GM12878 (cell line): ENCODE measurements at regions of chr9 and their contacts with region 1.

Region 1: DNA sequence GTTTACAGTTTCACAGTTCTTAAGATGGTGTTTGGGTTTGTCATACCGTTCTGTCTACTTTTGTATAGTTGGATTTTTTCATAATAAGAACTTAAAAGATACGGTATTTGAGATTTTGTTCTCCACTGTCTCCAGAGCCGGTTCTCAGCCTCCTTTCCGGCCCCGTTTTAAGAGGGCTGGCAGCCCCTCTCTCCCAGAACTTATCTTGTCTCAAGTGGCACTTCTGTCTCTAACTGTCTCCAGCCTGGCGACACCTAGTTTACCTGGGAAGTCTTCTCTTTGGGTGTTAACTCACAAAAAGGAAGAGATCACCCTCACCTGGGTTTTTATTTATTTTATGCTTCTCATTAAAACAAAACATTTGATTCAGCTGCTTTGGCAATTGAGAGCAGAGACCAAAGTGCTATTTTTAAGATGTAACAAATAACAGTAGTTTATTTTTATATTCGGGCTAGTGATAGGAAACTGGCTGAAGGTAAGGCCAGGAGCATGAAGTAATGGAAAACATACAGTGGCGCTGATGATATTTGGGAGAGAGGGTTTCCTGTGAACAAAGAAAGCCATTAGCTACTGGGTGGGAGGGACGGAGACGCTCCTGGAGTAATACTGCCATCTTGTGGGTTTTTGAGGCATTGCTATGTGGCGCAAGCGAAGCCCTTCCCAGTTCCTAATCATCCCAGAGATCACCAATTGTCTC is 48.3 kb downstream of the ACER2 start:
- DNase-seq: peak; percentile 46
- ATAC-seq: peak; percentile 93
- H3K4me3 ChIP-seq: peak overlapping the region; percentile 47; the same call in 1 of the 2 replicates
- H3K27ac ChIP-seq: no peak overlapping the region
- H3K4me1 ChIP-seq: peaks cover 6% of the 10 kb centered on the region
- H3K27me3 ChIP-seq: no peaks in the 10 kb centered on the region
- CTCF ChIP-seq: peak; percentile 86 to 93 (median 92)
- EP300 ChIP-seq: no peak
- POLR2A ChIP-seq: no peak
- RAD21 ChIP-seq: peak; percentile 90

Region 2: GRCh38 chr9:18255158-18255629 is 1202.0 kb before region 1 on chr9:
- CTCF ChIA-PET with region 1: interaction called, 9 read pairs
- POLR2A ChIA-PET with region 1: no interaction called
- RAD21 ChIA-PET with region 1: interaction called, 3 read pairs
- SMC1A ChIA-PET with region 1: interaction called, 12 read pairs
- in situ Hi-C with region 1: loop called (anchors 25 kb)
- intact Hi-C with region 1: loop called (anchors 5 kb)
- DNase-seq: peak; percentile 9
- ATAC-seq: peak; percentile 96
- H3K4me3 ChIP-seq: no peak overlapping the region
- H3K27ac ChIP-seq: no peak overlapping the region
- H3K4me1 ChIP-seq: no peaks in the 10 kb centered on the region
- H3K27me3 ChIP-seq: no peaks in the 10 kb centered on the region
- CTCF ChIP-seq: peak; percentile 80 to 92 (median 88)
- EP300 ChIP-seq: no peak
- POLR2A ChIP-seq: no peak
- RAD21 ChIP-seq: peak; percentile 96

Region 3: DNA sequence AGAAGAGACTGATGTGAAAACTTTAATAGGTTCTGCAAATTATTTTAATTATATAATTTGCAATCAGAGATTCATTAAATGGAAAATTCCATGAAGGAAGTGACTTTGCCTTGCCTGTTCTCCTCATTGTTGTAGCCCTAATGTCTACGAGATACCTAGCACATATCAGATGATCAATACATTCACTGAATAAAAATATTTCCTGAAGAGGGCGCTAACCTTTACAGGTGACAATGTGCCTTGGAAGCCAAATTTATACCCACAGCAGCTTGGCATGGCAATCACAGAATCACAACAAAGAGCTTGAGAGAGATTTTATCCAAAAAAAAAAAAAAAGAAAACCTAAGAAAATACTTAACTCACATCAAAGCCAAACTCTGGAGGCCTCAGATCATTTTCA is 371.8 kb before region 1 on chr9:
- CTCF ChIA-PET with region 1: interaction called, 29 read pairs
- POLR2A ChIA-PET with region 1: no interaction called
- RAD21 ChIA-PET with region 1: interaction called, 19 read pairs
- SMC1A ChIA-PET with region 1: interaction called, 34 read pairs
- in situ Hi-C with region 1: no loop called
- intact Hi-C with region 1: loop called (anchors 5 kb)
- DNase-seq: no peak
- ATAC-seq: peak; percentile 88
- H3K4me3 ChIP-seq: no peak overlapping the region
- H3K27ac ChIP-seq: no peak overlapping the region
- H3K4me1 ChIP-seq: no peaks in the 10 kb centered on the region
- H3K27me3 ChIP-seq: no peaks in the 10 kb centered on the region
- CTCF ChIP-seq: peak; percentile 33 to 47 (median 35); a peak in 3 of 6 replicates
- EP300 ChIP-seq: no peak
- POLR2A ChIP-seq: no peak
- RAD21 ChIP-seq: peak; percentile 47

Region 4: DNA sequence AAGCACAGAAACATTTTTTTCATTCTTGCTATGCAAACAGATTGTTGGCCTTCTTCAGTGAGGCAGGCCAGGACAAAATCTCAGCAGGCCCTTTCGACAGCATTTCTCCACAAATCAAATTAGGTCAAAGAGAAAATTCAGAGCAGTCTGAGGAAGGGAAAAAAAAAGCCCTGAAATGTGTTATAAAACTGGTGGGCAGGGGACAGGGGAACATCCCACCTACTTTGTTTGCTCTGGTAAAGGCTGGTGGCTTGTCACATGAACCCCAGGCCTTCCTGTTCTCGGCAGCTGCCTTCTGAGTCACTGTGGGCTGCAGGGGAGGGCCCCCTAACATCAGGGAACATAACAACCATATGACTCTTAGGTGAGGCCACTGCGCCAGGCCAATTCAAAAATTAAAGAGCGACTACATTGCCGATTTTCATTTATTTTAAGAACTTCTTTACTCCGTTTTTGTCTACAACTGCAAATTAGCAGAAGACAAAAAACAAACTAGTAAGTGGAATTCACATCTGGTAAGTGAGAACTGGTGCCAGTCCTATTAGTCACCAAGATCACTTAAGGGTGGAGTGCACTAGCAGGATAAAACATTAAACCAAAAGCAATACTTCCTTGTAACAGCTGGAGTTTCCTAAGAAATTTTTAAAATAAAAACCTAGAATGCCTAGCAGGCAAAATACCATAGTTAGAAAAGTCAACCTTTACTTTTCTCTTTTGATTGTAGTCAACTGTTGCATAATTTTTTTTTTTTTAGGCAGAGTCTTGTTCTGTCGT is 272.8 kb before region 1 on chr9:
- CTCF ChIA-PET with region 1: interaction called, 8 read pairs
- POLR2A ChIA-PET with region 1: interaction called, 3 read pairs
- RAD21 ChIA-PET with region 1: interaction called, 11 read pairs
- SMC1A ChIA-PET with region 1: interaction called, 7 read pairs
- in situ Hi-C with region 1: no loop called
- intact Hi-C with region 1: no loop called
- DNase-seq: peak; percentile 46
- ATAC-seq: peak; percentile 99
- H3K4me3 ChIP-seq: no peak overlapping the region
- H3K27ac ChIP-seq: peak overlapping the region; percentile 59; the same call in 1 of the 2 replicates
- H3K4me1 ChIP-seq: 0 out of 2 replicates have a peak, but pooled peaks cover 5% of the 10 kb centered on the region
- H3K27me3 ChIP-seq: no peaks in the 10 kb centered on the region
- CTCF ChIP-seq: 0 out of 6 replicates have a peak, but pooled peaks of 1 of the 3 experiments have one; percentile 0
- EP300 ChIP-seq: peak; percentile 72 to 84; a peak in 3 of 4 replicates
- POLR2A ChIP-seq: peak; percentile 37; the same call in 1 of the 2 replicates
- RAD21 ChIP-seq: peak; percentile 19; the same call in 1 of the 2 replicates

Region 5: GRCh38 chr9:19379697-19380046 is 77.5 kb before region 1 on chr9:
- CTCF ChIA-PET with region 1: interaction called, 31 read pairs
- POLR2A ChIA-PET with region 1: interaction called, 5 read pairs
- RAD21 ChIA-PET with region 1: interaction called, 5 read pairs
- SMC1A ChIA-PET with region 1: interaction called, 7 read pairs
- in situ Hi-C with region 1: no loop called
- intact Hi-C with region 1: loop called (anchors 2 kb)
- DNase-seq: no peak
- ATAC-seq: peak; percentile 45
- H3K4me3 ChIP-seq: peak overlapping the region; percentile 82
- H3K27ac ChIP-seq: peak overlapping the region; percentile 88
- H3K4me1 ChIP-seq: peaks cover 5% of the 10 kb centered on the region
- H3K27me3 ChIP-seq: no peaks in the 10 kb centered on the region
- CTCF ChIP-seq: no peak
- EP300 ChIP-seq: no peak
- POLR2A ChIP-seq: no peak
- RAD21 ChIP-seq: no peak